ENCODE measurements at regions of chr1 and their contacts with region 1.

Region 1: DNA sequence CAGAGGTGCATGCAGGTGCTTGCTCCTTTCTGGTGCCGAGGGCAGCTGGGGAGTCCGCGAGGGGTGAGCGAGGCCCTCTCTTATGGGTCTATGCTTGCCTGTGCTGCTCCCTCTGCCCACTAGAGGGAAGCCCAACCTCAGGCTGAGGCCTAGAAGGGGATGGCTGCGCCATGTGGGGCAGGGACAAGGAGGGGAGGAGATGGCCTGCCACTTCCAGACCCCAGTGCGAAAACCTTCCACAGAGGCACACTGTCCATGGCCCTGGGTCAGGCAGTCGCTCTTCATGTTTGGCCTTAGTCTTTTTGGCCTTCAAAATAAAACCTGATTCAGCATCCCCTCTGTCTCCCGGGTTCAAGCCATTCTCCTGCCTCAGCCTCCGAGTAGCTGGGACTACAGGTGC is 14.0 kb downstream of the RHBG start:
- DNase-seq: peak; percentile 74
- H3K4me3 Mint-ChIP-seq: no peak overlapping the region
- H3K27ac Mint-ChIP-seq: no peak overlapping the region
- H3K4me1 Mint-ChIP-seq: peaks cover 4% of the 10 kb centered on the region
- H3K27me3 Mint-ChIP-seq: peaks cover 10% of the 10 kb centered on the region

Region 2: DNA sequence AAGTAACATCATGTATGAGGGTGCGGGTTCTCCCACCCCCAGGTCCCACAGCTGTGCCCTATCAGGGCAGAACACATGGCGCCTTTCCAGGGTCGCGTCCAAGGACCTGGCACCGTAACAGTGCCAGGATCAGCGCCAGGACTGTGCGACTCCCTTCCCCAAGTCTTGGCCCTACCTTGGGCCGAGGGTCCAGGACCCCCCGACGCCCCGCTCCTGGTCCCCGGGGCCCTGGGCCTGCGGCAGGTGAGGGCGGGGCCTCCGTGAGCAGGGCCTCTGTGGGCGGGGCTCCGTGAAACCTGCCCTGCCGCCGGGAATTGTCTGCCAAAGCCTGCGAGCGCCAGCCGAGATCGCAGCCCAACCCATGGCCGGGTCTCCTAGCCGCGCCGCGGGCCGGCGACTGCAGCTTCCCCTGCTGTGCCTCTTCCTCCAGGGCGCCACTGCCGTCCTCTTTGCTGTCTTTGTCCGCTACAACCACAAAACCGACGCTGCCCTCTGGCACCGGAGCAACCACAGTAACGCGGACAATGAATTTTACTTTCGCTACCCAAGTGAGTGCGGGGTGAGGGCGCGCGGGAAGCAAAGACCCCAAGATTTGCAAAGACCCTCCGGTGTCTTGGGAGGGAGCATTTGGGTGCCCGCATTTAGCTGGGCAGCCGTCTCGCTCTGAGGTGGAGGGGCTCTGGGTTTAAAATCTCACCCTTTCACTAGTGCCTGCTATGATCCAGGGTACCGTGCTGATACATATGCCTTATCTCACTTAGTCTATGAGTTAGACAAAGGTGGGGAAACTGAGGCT is 13.9 kb before region 1 on chr1 and contains the start of gene RHBG:
- CTCF ChIA-PET with region 1: interaction called, 29 read pairs
- POLR2A ChIA-PET with region 1: no interaction called
- intact Hi-C with region 1: no loop called
- DNase-seq: peak; percentile 24
- H3K4me3 Mint-ChIP-seq: no peak within 1 kb of the TSS
- H3K27ac Mint-ChIP-seq: no peak within 1 kb of the TSS
- H3K4me1 Mint-ChIP-seq: peaks cover 2% of the 10 kb centered on the region
- H3K27me3 Mint-ChIP-seq: peaks cover 31% of the 10 kb centered on the region
- total RNA-seq, gene RHBG: not detected

Region 3: DNA sequence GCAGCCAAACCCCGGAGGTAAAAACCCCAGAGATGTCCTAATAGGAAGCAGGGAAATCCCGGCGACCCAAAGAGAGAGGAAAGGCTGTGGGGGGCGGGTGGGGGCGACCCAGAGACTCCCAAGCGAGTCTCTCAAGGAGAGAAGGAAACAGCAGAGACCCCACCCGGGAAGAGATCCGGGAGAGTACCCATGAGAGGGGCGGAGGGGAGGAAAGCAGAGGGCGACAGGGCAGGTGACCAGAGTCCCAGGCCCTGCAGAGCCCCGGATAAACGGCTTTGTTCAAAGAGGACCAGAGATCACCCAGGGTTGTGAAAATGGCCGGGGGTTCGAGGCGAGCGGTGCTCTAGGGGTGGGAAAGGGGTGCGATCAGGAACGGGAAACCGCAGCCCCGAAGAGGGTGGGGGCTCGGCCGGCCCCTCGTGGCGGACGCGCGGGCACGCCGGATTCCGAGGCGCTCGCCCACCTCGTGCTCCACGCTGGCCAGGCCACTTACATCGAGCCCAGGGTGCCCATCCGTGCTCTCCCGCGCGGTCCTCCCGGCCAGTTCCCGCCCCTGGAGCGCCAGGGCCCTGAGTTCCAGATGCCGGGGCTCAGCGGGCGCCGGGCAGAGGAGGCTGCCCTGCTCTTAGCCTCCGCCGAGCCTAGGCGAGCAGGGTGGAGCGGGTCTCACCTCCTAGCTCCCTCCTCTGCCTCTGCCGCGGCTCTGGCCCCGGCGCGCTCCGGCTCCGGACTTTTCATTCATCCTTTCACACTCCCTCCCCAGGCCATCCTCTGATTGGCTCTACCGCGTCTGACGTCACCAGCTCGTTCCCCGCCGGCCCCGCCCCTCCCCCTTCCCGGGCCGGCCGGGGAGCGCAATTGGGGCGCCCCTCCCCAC is 38.3 kb after region 1 on chr1:
- CTCF ChIA-PET with region 1: interaction called, 71 read pairs
- POLR2A ChIA-PET with region 1: interaction called, 3 read pairs
- intact Hi-C with region 1: no loop called
- DNase-seq: peak; percentile 86
- H3K4me3 Mint-ChIP-seq: peak overlapping the region; percentile 73
- H3K27ac Mint-ChIP-seq: no peak overlapping the region
- H3K4me1 Mint-ChIP-seq: peaks cover 21% of the 10 kb centered on the region
- H3K27me3 Mint-ChIP-seq: peaks cover 49% of the 10 kb centered on the region

Region 4: DNA sequence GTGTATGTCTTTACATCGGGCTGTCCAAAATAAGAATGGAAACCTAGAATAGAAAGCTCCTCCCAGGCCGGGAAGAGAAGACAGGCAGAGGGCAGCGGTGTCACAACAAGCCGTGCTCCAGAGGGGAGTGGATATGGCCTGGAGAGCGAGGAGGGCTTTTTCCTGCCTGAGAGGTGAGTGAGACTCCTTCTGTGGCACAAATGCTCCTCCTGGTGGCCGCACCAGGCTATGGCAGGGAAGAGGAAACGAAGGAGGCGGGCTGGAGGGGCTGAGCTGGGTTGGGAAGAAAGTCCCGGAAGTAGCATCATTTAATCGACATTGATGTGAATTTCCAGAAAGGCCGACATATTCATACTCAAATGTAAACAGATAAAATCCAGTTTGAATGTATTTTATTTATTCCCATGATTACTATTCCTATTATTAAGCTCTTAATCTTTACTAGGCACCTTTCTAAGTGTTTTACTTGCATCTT is 62.8 kb after region 1 on chr1:
- CTCF ChIA-PET with region 1: interaction called, 491 read pairs
- POLR2A ChIA-PET with region 1: interaction called, 8 read pairs
- intact Hi-C with region 1: loop called (anchors 1 kb)
- DNase-seq: peak; percentile 90
- H3K4me3 Mint-ChIP-seq: no peak overlapping the region
- H3K27ac Mint-ChIP-seq: no peak overlapping the region
- H3K4me1 Mint-ChIP-seq: peaks cover 16% of the 10 kb centered on the region
- H3K27me3 Mint-ChIP-seq: peaks cover 47% of the 10 kb centered on the region

Region 5: GRCh38 chr1:156480411-156481192 is 97.6 kb after region 1 on chr1:
- CTCF ChIA-PET with region 1: interaction called, 13 read pairs
- POLR2A ChIA-PET with region 1: no interaction called
- intact Hi-C with region 1: no loop called
- DNase-seq: peak; percentile 83
- H3K4me3 Mint-ChIP-seq: peak overlapping the region; percentile 39
- H3K27ac Mint-ChIP-seq: peak overlapping the region; percentile 79
- H3K4me1 Mint-ChIP-seq: peaks cover 66% of the 10 kb centered on the region
- H3K27me3 Mint-ChIP-seq: no peaks in the 10 kb centered on the region

Region 6: GRCh38 chr1:156601122-156601830 is 218.3 kb after region 1 on chr1 and contains the start of gene GPATCH4:
- CTCF ChIA-PET with region 1: interaction called, 23 read pairs
- POLR2A ChIA-PET with region 1: no interaction called
- intact Hi-C with region 1: no loop called
- DNase-seq: peak; percentile 88
- H3K4me3 Mint-ChIP-seq: peak within 1 kb of the TSS; percentile 94
- H3K27ac Mint-ChIP-seq: peak within 1 kb of the TSS; percentile 95
- H3K4me1 Mint-ChIP-seq: peaks cover 38% of the 10 kb centered on the region
- H3K27me3 Mint-ChIP-seq: no peaks in the 10 kb centered on the region
- total RNA-seq, gene GPATCH4: 40.2 to 43.2 TPM

Region 7: GRCh38 chr1:156625436-156626078 is 242.5 kb after region 1 on chr1:
- CTCF ChIA-PET with region 1: interaction called, 12 read pairs
- POLR2A ChIA-PET with region 1: no interaction called
- intact Hi-C with region 1: no loop called
- DNase-seq: peak; percentile 64
- H3K4me3 Mint-ChIP-seq: peak overlapping the region; percentile 48
- H3K27ac Mint-ChIP-seq: no peak overlapping the region
- H3K4me1 Mint-ChIP-seq: peaks cover 10% of the 10 kb centered on the region
- H3K27me3 Mint-ChIP-seq: peaks cover 46% of the 10 kb centered on the region

Measured in activated CD4-positive, alpha-beta memory T cell treated with anti-CD3 and anti-CD28 coated beads for 36 hours (primary cell).